ENCODE measurements at regions of chr3 and their contacts with region 1.

Region 1: DNA sequence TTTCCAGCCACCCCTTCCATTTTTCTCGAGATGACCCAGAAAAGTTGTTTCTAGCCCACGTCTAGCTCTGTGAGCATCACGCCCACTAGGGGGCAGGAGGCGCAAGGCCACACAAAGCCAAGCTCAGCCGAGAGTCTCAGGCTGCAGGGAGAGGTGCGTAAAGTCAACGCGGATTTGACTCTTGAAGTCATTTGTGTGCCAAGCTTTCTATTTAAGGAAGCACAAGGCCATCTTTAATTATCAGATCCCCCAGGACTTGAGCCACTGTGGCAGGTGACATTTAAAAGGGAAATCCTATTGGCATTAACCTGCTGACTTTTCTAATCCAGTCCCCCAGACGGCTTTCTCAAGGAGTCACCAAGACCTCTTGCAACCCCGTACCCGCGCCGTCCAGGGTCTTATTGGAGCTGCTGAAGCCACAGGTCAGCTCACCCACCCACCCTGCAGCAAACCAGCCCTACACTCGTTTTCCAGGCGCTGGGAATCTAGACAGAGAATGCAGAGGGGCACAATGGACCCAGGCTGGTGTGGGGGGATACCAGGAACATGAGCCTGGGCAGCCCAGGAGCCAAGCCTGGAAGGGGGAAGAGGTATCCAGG is 62.1 kb downstream of the CAPN7 start:
- DNase-seq: peak; percentile 93
- ATAC-seq: peak; percentile 55
- H3K4me3 Mint-ChIP-seq: no peak overlapping the region
- H3K27ac Mint-ChIP-seq: no peak overlapping the region
- H3K4me1 Mint-ChIP-seq: peaks cover 57% of the 10 kb centered on the region
- H3K27me3 Mint-ChIP-seq: peaks cover 5% of the 10 kb centered on the region

Region 2: GRCh38 chr3:14915636-14916222 is 352.4 kb before region 1 on chr3:
- CTCF ChIA-PET with region 1: no interaction called
- POLR2A ChIA-PET with region 1: no interaction called
- intact Hi-C with region 1: no loop called
- DNase-seq: peak; percentile 28
- ATAC-seq: peak; percentile 39
- H3K4me3 Mint-ChIP-seq: no peak overlapping the region
- H3K27ac Mint-ChIP-seq: no peak overlapping the region
- H3K4me1 Mint-ChIP-seq: no peaks in the 10 kb centered on the region
- H3K27me3 Mint-ChIP-seq: peaks cover 2% of the 10 kb centered on the region

Region 3: GRCh38 chr3:15108082-15108545 is 160.0 kb before region 1 on chr3:
- CTCF ChIA-PET with region 1: interaction called, 7 read pairs
- POLR2A ChIA-PET with region 1: no interaction called
- intact Hi-C with region 1: loop called in 1 of 2 experiments (anchors 5 kb)
- DNase-seq: peak; percentile 86
- ATAC-seq: peak; percentile 96
- H3K4me3 Mint-ChIP-seq: no peak overlapping the region
- H3K27ac Mint-ChIP-seq: no peak overlapping the region
- H3K4me1 Mint-ChIP-seq: no peaks in the 10 kb centered on the region
- H3K27me3 Mint-ChIP-seq: peaks cover 3% of the 10 kb centered on the region

Region 4: GRCh38 chr3:15241341-15241740 is 26.8 kb before region 1 on chr3:
- CTCF ChIA-PET with region 1: interaction called, 12 read pairs
- POLR2A ChIA-PET with region 1: no interaction called
- intact Hi-C with region 1: no loop called
- DNase-seq: peak; percentile 70
- ATAC-seq: peak; percentile 57
- H3K4me3 Mint-ChIP-seq: no peak overlapping the region
- H3K27ac Mint-ChIP-seq: no peak overlapping the region
- H3K4me1 Mint-ChIP-seq: peaks cover 4% of the 10 kb centered on the region
- H3K27me3 Mint-ChIP-seq: no peaks in the 10 kb centered on the region

Region 5: GRCh38 chr3:15309662-15310335 is 41.7 kb after region 1 on chr3:
- CTCF ChIA-PET with region 1: interaction called, 43 read pairs
- POLR2A ChIA-PET with region 1: interaction called, 3 read pairs
- intact Hi-C with region 1: loop called (anchors 1 kb)
- DNase-seq: peak; percentile 72
- ATAC-seq: peak; percentile 51
- H3K4me3 Mint-ChIP-seq: peak overlapping the region; percentile 49
- H3K27ac Mint-ChIP-seq: peak overlapping the region; percentile 95
- H3K4me1 Mint-ChIP-seq: peaks cover 66% of the 10 kb centered on the region
- H3K27me3 Mint-ChIP-seq: no peaks in the 10 kb centered on the region

Region 6: DNA sequence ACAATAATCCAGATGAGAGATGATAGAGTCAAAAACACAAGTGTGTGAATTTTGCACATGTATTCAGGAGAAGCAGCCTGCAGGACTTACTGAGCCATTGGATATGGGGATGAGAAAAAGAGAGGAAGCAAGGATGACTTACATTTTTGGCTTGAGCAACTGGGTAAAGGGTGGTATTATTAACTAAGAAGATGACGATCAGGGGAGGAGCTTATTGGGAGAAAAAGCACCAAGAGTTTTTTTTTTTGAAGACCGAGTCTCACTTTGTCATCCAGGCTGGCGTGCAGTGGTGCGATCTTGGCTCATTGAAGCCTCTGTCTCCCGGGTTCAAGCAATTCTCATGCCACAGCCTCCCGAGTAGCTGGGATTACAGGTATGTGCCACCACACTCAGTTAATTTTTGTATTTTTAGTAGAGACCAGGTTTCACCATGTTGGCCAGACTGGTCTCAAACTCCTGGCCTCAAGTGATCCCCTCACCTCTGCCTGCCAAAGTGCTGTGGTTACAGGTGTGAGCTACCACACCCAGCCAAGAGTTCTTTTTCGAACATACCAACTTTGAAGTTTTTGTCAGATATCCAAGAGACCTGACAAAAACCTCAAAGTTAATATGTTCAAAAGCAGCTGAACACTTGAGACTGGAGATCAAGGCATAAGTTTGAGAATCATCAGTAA is 79.1 kb after region 1 on chr3:
- CTCF ChIA-PET with region 1: interaction called, 11 read pairs
- POLR2A ChIA-PET with region 1: no interaction called
- intact Hi-C with region 1: no loop called
- DNase-seq: no peak
- ATAC-seq: no peak
- H3K4me3 Mint-ChIP-seq: no peak overlapping the region
- H3K27ac Mint-ChIP-seq: peak overlapping the region; percentile 49
- H3K4me1 Mint-ChIP-seq: peaks cover 34% of the 10 kb centered on the region
- H3K27me3 Mint-ChIP-seq: no peaks in the 10 kb centered on the region

Region 7: GRCh38 chr3:15377961-15378791 is 110.0 kb after region 1 on chr3:
- CTCF ChIA-PET with region 1: interaction called, 133 read pairs
- POLR2A ChIA-PET with region 1: interaction called, 3 read pairs
- intact Hi-C with region 1: loop called (anchors 1 kb)
- DNase-seq: peak; percentile 96
- ATAC-seq: peak; percentile 96
- H3K4me3 Mint-ChIP-seq: no peak overlapping the region
- H3K27ac Mint-ChIP-seq: peak overlapping the region; percentile 73
- H3K4me1 Mint-ChIP-seq: peaks cover 6% of the 10 kb centered on the region
- H3K27me3 Mint-ChIP-seq: no peaks in the 10 kb centered on the region

Region 8: GRCh38 chr3:15405448-15406050 is 137.4 kb after region 1 on chr3:
- CTCF ChIA-PET with region 1: interaction called, 120 read pairs
- POLR2A ChIA-PET with region 1: interaction called, 3 read pairs
- intact Hi-C with region 1: loop called (anchors 1 to 2 kb)
- DNase-seq: no peak
- ATAC-seq: peak; percentile 72
- H3K4me3 Mint-ChIP-seq: no peak overlapping the region
- H3K27ac Mint-ChIP-seq: no peak overlapping the region
- H3K4me1 Mint-ChIP-seq: no peaks in the 10 kb centered on the region
- H3K27me3 Mint-ChIP-seq: no peaks in the 10 kb centered on the region

Measured in activated CD4-positive, alpha-beta T cell treated with anti-CD3 and anti-CD28 coated beads for 36 hours (primary cell).